ENCODE measurements at regions of chr2 and their contacts with region 1.

Region 1: DNA sequence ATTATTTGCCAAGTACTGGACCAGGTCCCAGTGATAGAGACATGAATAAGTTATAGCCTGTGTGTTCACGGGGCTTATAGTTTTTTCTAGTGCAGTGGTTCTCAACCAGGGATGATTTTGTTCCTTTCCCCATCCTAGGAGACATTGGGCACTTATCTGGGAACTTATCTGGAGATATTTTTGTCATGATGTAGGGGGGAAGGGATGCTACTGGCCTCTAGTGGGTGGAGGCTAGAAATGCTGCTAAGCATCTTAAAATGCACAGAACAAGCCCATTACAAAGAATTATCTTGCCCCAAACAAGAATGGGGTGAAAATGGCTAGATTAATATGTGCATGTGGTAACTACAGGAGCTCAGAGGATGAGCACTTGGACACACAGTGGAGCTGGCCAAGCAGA is 75.2 kb downstream of the KLHL29 start:
- DNase-seq: no peak
- ATAC-seq: peak; percentile 76
- H3K4me3 ChIP-seq: no peak overlapping the region
- H3K27ac ChIP-seq: no peak overlapping the region
- H3K4me1 ChIP-seq: no peaks in the 10 kb centered on the region
- H3K27me3 ChIP-seq: no peaks in the 10 kb centered on the region
- CTCF ChIP-seq: peak; percentile 70 to 78 (median 77); a peak in 5 of 6 replicates
- EP300 ChIP-seq: no peak
- POLR2A ChIP-seq: no peak
- RAD21 ChIP-seq: peak; percentile 82

Region 2: DNA sequence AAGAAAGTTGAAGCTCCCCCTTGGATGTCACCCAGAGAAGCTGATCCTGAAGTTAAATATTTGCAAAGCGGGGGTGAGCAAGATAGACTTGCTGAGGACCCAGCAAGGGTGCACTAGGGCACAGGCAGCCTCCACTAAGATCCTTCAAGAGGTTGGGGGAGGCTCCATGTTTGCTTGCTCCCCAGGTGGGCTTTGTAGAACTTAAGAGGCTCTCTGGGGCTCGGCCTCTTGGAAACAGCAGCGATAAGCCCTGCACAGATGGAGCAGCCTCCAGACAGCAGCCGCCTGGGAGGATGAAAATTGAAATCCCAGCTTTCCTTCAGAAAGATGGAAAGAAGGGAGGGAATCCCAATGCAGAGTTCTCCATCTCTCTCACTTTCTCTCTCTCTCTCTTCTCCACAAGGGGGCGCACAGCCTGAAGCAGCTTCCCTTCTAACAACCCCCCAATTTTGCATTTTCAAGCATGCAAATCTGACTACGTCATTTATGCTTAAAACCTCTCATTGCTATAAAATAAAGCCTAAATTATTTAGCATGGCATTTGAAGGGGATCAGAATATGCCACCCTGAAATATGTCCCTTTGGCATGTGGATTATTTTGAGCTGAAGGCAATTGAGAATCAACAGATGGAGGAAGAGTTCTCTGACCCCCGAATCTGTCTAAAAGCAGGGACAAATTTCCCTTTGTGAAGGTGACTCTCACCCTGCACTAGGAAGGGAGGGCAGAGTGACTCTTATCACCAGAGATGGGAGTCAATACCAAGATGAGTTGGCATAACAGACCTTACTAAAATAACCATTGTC is 260.9 kb before region 1 on chr2:
- CTCF ChIA-PET with region 1: interaction called, 8 read pairs
- POLR2A ChIA-PET with region 1: no interaction called
- RAD21 ChIA-PET with region 1: interaction called, 4 read pairs
- SMC1A ChIA-PET with region 1: no interaction called
- in situ Hi-C with region 1: no loop called
- intact Hi-C with region 1: loop called (anchors 1 kb)
- DNase-seq: no peak
- ATAC-seq: peak; percentile 72
- H3K4me3 ChIP-seq: no peak overlapping the region
- H3K27ac ChIP-seq: no peak overlapping the region
- H3K4me1 ChIP-seq: no peaks in the 10 kb centered on the region
- H3K27me3 ChIP-seq: no peaks in the 10 kb centered on the region
- CTCF ChIP-seq: peak; percentile 53 to 73 (median 72)
- EP300 ChIP-seq: no peak
- POLR2A ChIP-seq: no peak
- RAD21 ChIP-seq: peak; percentile 27; the same call in 1 of the 2 replicates

Region 3: GRCh38 chr2:23312996-23313606 is 147.1 kb before region 1 on chr2:
- CTCF ChIA-PET with region 1: interaction called, 3 read pairs
- POLR2A ChIA-PET with region 1: no interaction called
- RAD21 ChIA-PET with region 1: no interaction called
- SMC1A ChIA-PET with region 1: no interaction called
- in situ Hi-C with region 1: no loop called
- intact Hi-C with region 1: loop called (anchors 1 kb)
- DNase-seq: peak; percentile 5
- ATAC-seq: peak; percentile 99
- H3K4me3 ChIP-seq: no peak overlapping the region
- H3K27ac ChIP-seq: no peak overlapping the region
- H3K4me1 ChIP-seq: no peaks in the 10 kb centered on the region
- H3K27me3 ChIP-seq: peaks cover 0 to 1% of the 10 kb centered on the region in 2 experiments; a peak in 2 of 4 replicates
- CTCF ChIP-seq: peak; percentile 73 to 98 (median 97)
- EP300 ChIP-seq: no peak
- POLR2A ChIP-seq: no peak
- RAD21 ChIP-seq: peak; percentile 73

Region 4: GRCh38 chr2:23330214-23330613 is 130.0 kb before region 1 on chr2:
- CTCF ChIA-PET with region 1: interaction called, 13 read pairs
- POLR2A ChIA-PET with region 1: no interaction called
- RAD21 ChIA-PET with region 1: interaction called, 4 read pairs
- SMC1A ChIA-PET with region 1: interaction called, 6 read pairs
- in situ Hi-C with region 1: no loop called
- intact Hi-C with region 1: no loop called
- DNase-seq: no peak
- ATAC-seq: peak; percentile 92
- H3K4me3 ChIP-seq: no peak overlapping the region
- H3K27ac ChIP-seq: no peak overlapping the region
- H3K4me1 ChIP-seq: no peaks in the 10 kb centered on the region
- H3K27me3 ChIP-seq: peaks cover 3 to 4% of the 10 kb centered on the region in 2 experiments; a peak in 2 of 4 replicates
- CTCF ChIP-seq: peak; percentile 59 to 60 (median 59); a peak in 5 of 6 replicates
- EP300 ChIP-seq: no peak
- POLR2A ChIP-seq: no peak
- RAD21 ChIP-seq: peak; percentile 75

Region 5: DNA sequence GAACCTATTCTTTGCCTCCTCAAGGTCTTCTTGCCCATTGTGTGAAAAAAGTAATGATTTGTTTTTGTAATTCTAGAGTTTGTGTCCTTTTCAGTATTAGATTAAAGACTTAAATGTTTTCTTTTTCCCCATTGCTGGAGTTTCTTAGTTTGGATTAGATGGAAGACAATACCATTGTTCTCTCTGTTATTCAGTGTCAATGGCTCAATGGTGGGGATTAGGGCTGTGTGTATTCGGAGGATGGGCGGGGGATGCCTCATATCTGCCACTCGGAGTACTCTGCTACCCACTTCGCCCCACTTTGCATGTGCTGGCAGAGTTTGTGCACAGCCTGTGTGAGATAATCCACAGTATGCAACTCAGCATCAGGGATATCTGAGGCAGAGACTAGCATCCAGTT is 14.8 kb after region 1 on chr2:
- CTCF ChIA-PET with region 1: no interaction called
- POLR2A ChIA-PET with region 1: no interaction called
- RAD21 ChIA-PET with region 1: no interaction called
- SMC1A ChIA-PET with region 1: no interaction called
- in situ Hi-C with region 1: no loop called
- intact Hi-C with region 1: no loop called
- DNase-seq: no peak
- ATAC-seq: no peak
- H3K4me3 ChIP-seq: no peak overlapping the region
- H3K27ac ChIP-seq: no peak overlapping the region
- H3K4me1 ChIP-seq: no peaks in the 10 kb centered on the region
- H3K27me3 ChIP-seq: no peaks in the 10 kb centered on the region
- CTCF ChIP-seq: no peak
- EP300 ChIP-seq: no peak
- POLR2A ChIP-seq: no peak
- RAD21 ChIP-seq: no peak

Measured in GM12878 (cell line).